Activated CD4-positive, alpha-beta T cell treated with anti-CD3 and anti-CD28 coated beads, Interleukin-2, amount 10 ng/mL, durations not matched to agents 7 days and 5 days (primary cell): ENCODE measurements at regions of chr7 and their contacts with region 1.

Region 1: GRCh38 chr7:130189343-130189742 is 15.9 kb downstream of the TMEM209 start:
- DNase-seq: no peak
- H3K4me3 Mint-ChIP-seq: no peak overlapping the region
- H3K27ac Mint-ChIP-seq: no peak overlapping the region
- H3K4me1 Mint-ChIP-seq: peaks cover 2% of the 10 kb centered on the region
- H3K27me3 Mint-ChIP-seq: no peaks in the 10 kb centered on the region

Region 2: GRCh38 chr7:129553861-129554530 is 635.3 kb before region 1 on chr7:
- CTCF ChIA-PET with region 1: no interaction called
- POLR2A ChIA-PET with region 1: no interaction called
- DNase-seq: peak; percentile 36
- H3K4me3 Mint-ChIP-seq: no peak overlapping the region
- H3K27ac Mint-ChIP-seq: no peak overlapping the region
- H3K4me1 Mint-ChIP-seq: peaks cover 5% of the 10 kb centered on the region
- H3K27me3 Mint-ChIP-seq: peaks cover 9% of the 10 kb centered on the region

Region 3: GRCh38 chr7:130201796-130202195 is 12.5 kb after region 1 on chr7:
- CTCF ChIA-PET with region 1: interaction called, 12 read pairs
- POLR2A ChIA-PET with region 1: no interaction called
- DNase-seq: no peak
- H3K4me3 Mint-ChIP-seq: no peak overlapping the region
- H3K27ac Mint-ChIP-seq: no peak overlapping the region
- H3K4me1 Mint-ChIP-seq: peaks cover 39% of the 10 kb centered on the region
- H3K27me3 Mint-ChIP-seq: no peaks in the 10 kb centered on the region